Left cardiac atrium (tissue), 4 donors: ENCODE measurements at regions of chrX and their contacts with region 1.

Region 1: GRCh38 chrX:117996918-117997480 is 119.6 kb downstream of the KLHL13 start:
- DNase-seq: no peak
- ATAC-seq: no peak

Region 2: DNA sequence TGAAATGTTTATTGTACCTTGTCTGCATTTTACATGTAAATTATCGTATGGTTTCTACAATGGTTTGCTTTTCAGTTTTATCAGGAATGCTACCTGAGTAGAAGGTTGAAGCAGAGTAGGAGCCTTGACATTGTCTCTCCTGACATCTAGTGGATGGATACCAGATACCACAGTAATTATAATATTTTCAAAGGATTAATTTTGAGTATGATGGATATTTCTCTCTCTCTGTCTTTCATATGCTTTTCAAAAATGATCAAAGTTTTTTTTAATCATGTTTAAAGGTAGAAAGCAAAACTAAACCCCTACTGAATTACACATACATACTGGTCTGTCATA is 229.1 kb after region 1 on chrX:
- intact Hi-C with region 1: loop called in 1 of 2 experiments (anchors 10 kb)
- DNase-seq: no peak
- ATAC-seq: peak in 1 of 2 donors; percentile 51